Natural killer cell (primary cell): ENCODE measurements at regions of chr2 and their contacts with region 1.

Region 1: GRCh38 chr2:84925724-84926376 is 20.4 kb downstream of the TMSB10 start:
- DNase-seq: peak; percentile 97 to 99
- ATAC-seq: peak; percentile 85 to 92 (median 88)
- H3K4me3 ChIP-seq: peak overlapping the region; percentile 48
- H3K4me3 Mint-ChIP-seq: peak overlapping the region; percentile 98
- H3K27ac ChIP-seq: no peak overlapping the region
- H3K27ac Mint-ChIP-seq: peak overlapping the region; percentile 88 to 90
- H3K4me1 ChIP-seq: peaks cover 27% of the 10 kb centered on the region
- H3K4me1 Mint-ChIP-seq: peaks cover 21 to 28% of the 10 kb centered on the region in 2 donors
- H3K27me3 ChIP-seq: no peaks in the 10 kb centered on the region
- H3K27me3 Mint-ChIP-seq: no peaks in the 10 kb centered on the region
- CTCF ChIP-seq: peak; percentile 97

Region 2: DNA sequence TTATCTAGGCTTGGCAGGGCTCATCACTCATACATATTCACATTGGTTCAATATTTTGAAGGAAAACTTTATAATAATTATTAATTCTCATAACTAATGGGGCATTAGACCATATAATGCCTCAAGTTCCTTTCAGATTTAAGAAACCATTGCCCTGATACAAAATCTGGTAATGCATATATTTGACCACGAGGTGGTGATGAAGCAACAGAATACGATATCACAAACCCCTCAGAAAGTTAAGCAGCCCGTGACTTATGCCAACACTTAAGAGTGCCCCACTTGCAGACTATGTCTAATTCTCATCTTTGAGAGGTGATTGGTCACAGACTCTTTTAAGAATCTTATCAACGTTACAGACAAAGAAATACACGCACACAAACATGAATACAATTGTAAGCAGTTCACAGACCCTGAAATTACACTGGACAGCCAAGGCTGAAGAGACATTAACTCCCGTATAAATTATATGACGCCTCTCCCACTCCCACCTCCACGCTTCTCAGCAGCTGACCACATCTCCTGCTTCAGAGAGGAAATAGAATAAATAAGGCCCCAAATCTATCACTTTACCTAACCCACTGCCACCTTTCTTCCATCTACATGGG is 430.2 kb before region 1 on chr2:
- intact Hi-C with region 1: loop called (anchors 1 kb)
- DNase-seq: peak in 1 of 2 donors; percentile 88
- ATAC-seq: peak; percentile 89 to 100 (median 99)
- H3K4me3 ChIP-seq: no peak overlapping the region
- H3K4me3 Mint-ChIP-seq: no peak overlapping the region
- H3K27ac ChIP-seq: no peak overlapping the region
- H3K27ac Mint-ChIP-seq: no peak overlapping the region
- H3K4me1 ChIP-seq: peaks cover 3% of the 10 kb centered on the region
- H3K4me1 Mint-ChIP-seq: peaks cover 0 to 6% of the 10 kb centered on the region in 2 donors
- H3K27me3 ChIP-seq: no peaks in the 10 kb centered on the region
- H3K27me3 Mint-ChIP-seq: peaks cover 12 to 19% of the 10 kb centered on the region in 2 donors
- CTCF ChIP-seq: peak; percentile 84

Region 3: DNA sequence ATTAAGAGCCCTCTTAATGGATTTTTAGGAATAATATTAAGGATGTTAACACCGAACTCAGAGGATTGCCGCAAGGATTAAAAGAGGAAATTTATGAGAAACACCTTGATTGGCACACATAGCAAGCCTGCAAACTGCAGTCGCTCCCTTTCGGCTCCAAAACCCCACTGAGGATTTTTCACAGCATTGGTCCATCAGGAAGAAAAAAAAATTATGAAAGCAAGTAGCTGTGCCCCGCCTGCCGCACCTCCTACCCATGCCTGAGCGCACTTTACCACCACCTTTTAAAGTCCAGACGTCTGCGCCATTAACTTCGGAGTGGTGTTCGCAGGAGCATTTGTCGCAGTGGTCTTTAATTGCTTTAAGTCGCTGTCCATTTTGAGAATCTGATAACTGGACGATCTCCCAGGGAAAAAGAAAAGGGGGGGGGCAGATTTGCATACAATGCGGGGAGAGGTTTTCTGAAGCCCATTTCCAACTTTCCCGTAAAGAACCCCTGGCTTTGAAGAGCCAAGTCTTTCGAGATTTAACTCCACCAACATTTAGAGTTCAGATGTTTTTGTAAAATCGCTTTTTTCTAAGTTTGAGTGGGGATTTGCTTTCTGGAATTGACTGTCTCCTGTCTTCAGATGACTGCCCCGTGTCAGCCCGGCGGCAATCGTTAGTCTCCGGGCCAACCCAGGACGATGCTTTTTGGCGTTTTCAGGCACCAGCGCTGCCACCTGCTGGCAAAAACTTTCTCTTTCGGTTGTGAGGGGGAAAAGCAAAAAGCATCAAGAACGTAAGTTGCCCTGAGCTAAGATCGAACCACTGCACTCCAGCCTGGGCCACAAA is 44.1 kb before region 1 on chr2:
- intact Hi-C with region 1: loop called (anchors 2 kb)
- DNase-seq: peak; percentile 76 to 93
- ATAC-seq: peak; percentile 87 to 89 (median 88)
- H3K4me3 ChIP-seq: peak overlapping the region; percentile 55
- H3K4me3 Mint-ChIP-seq: peak overlapping the region; percentile 98
- H3K27ac ChIP-seq: peak overlapping the region; percentile 52
- H3K27ac Mint-ChIP-seq: peak overlapping the region; percentile 21 to 71
- H3K4me1 ChIP-seq: peaks cover 29% of the 10 kb centered on the region
- H3K4me1 Mint-ChIP-seq: peaks cover 34 to 37% of the 10 kb centered on the region in 2 donors
- H3K27me3 ChIP-seq: peaks cover 8% of the 10 kb centered on the region
- H3K27me3 Mint-ChIP-seq: peaks cover 9 to 24% of the 10 kb centered on the region in 2 donors
- CTCF ChIP-seq: peak; percentile 77

Region 4: GRCh38 chr2:84905181-84906107 is 20.4 kb before region 1 on chr2 and contains the start of gene TMSB10:
- intact Hi-C with region 1: loop called (anchors 1 kb)
- DNase-seq: peak; percentile 88 to 92
- ATAC-seq: peak; percentile 83 to 89 (median 84)
- H3K4me3 ChIP-seq: peak within 1 kb of the TSS; percentile 83
- H3K4me3 Mint-ChIP-seq: peak within 1 kb of the TSS; percentile 94
- H3K27ac ChIP-seq: peak within 1 kb of the TSS; percentile 81
- H3K27ac Mint-ChIP-seq: peak within 1 kb of the TSS; percentile 85 to 86
- H3K4me1 ChIP-seq: peaks cover 52% of the 10 kb centered on the region
- H3K4me1 Mint-ChIP-seq: peaks cover 55 to 76% of the 10 kb centered on the region in 2 donors
- H3K27me3 ChIP-seq: no peaks in the 10 kb centered on the region
- H3K27me3 Mint-ChIP-seq: no peaks in the 10 kb centered on the region
- CTCF ChIP-seq: no peak
- total RNA-seq, gene TMSB10: 1,247 to 1,683 (median 1,557) TPM

Region 5: DNA sequence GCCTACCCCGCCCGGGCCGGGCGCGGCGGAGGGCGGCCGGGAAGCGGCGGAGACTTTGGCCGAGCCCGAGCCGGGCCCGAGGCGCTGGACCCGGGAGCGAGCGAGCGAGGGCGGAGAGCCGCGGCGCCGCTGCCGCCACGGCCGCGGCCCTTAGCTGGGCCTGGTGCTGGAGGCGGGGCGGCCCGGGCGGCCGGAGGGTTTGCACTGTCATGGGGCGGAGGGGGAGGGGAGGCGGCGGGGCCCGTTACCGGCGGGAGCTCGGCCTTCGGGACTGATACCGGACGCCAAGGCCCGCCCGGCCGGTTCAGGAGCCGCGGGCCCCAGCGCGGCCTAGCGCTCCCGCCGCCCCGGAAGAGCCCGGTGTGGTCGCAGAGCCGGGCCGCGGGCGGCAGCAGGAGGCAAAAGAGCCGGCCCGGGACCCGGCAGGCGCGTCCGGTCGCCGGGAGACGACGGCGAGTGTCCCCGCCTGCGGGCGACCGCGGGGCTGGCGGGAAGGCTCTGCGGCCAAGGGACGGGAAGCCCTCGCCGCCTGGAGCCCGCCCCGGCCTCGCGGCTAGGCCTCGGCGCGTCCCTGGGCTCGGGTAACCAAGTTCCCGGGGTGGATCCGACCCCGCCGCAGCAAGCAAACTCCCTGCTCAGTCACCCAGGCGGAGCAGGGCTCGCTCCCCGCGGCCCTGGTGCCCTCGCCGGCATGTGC is 45.8 kb after region 1 on chr2:
- intact Hi-C with region 1: loop called (anchors 1 kb)
- DNase-seq: peak; percentile 75 to 84
- ATAC-seq: peak; percentile 44 to 64 (median 50)
- H3K4me3 ChIP-seq: peak overlapping the region; percentile 50
- H3K4me3 Mint-ChIP-seq: peak overlapping the region; percentile 83
- H3K27ac ChIP-seq: peak overlapping the region; percentile 85
- H3K27ac Mint-ChIP-seq: peak overlapping the region; percentile 90 to 92
- H3K4me1 ChIP-seq: peaks cover 14% of the 10 kb centered on the region
- H3K4me1 Mint-ChIP-seq: peaks cover 54 to 56% of the 10 kb centered on the region in 2 donors
- H3K27me3 ChIP-seq: no peaks in the 10 kb centered on the region
- H3K27me3 Mint-ChIP-seq: no peaks in the 10 kb centered on the region
- CTCF ChIP-seq: no peak

Region 6: DNA sequence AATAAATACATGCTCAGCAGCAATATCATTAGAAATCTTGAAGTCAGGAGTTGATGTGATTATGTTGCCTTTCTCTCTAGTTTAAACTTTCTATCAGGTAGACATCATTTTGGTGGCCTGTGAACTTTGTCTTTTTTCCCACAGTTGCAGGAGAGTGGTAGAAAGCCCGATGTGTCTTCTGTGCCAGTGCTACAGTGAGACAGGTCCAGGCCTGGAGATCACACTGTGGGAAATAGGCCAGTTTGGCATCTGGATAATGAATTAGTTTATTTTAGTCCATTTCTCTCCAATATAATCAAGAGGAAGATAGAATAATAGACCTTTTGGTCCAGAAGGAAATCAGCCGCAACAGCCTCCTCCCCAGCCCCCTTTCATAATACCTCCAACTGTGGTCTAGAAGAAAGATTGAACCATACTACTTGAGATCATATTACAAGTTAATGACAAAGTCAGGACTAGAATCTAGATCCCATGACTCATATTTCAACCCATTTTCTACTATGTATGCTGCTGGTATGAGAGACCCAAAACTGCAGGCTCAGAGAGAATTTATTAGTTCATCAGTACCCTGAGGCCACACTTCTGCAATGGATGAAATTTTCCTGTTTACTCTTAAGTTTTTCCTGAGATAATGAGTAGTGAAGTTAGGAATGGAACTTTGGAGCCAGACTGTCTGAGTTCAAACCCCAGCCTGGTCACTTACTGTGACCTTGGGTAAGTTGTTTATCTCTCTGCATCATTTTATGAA is 65.7 kb after region 1 on chr2:
- intact Hi-C with region 1: no loop called
- DNase-seq: no peak
- ATAC-seq: no peak
- H3K4me3 ChIP-seq: no peak overlapping the region
- H3K4me3 Mint-ChIP-seq: no peak overlapping the region
- H3K27ac ChIP-seq: no peak overlapping the region
- H3K27ac Mint-ChIP-seq: peak overlapping the region in 1 of 2 donors; percentile 10
- H3K4me1 ChIP-seq: peaks cover 3% of the 10 kb centered on the region
- H3K4me1 Mint-ChIP-seq: peaks cover 21 to 33% of the 10 kb centered on the region in 2 donors
- H3K27me3 ChIP-seq: no peaks in the 10 kb centered on the region
- H3K27me3 Mint-ChIP-seq: no peaks in the 10 kb centered on the region
- CTCF ChIP-seq: no peak

Region 7: GRCh38 chr2:85015653-85016360 is 90.0 kb after region 1 on chr2:
- intact Hi-C with region 1: loop called (anchors 2 kb)
- DNase-seq: no peak
- ATAC-seq: peak in 1 of 3 donors; percentile 40
- H3K4me3 ChIP-seq: no peak overlapping the region
- H3K4me3 Mint-ChIP-seq: no peak overlapping the region
- H3K27ac ChIP-seq: no peak overlapping the region
- H3K27ac Mint-ChIP-seq: peak overlapping the region; percentile 76
- H3K4me1 ChIP-seq: peaks cover 5% of the 10 kb centered on the region
- H3K4me1 Mint-ChIP-seq: peaks cover 61 to 69% of the 10 kb centered on the region in 2 donors
- H3K27me3 ChIP-seq: no peaks in the 10 kb centered on the region
- H3K27me3 Mint-ChIP-seq: no peaks in the 10 kb centered on the region
- CTCF ChIP-seq: no peak

Region 8: GRCh38 chr2:85277416-85278158 is 351.7 kb after region 1 on chr2:
- intact Hi-C with region 1: no loop called
- DNase-seq: no peak
- ATAC-seq: no peak
- H3K4me3 ChIP-seq: no peak overlapping the region
- H3K4me3 Mint-ChIP-seq: no peak overlapping the region
- H3K27ac ChIP-seq: no peak overlapping the region
- H3K27ac Mint-ChIP-seq: no peak overlapping the region
- H3K4me1 ChIP-seq: no peaks in the 10 kb centered on the region
- H3K4me1 Mint-ChIP-seq: no peaks in the 10 kb centered on the region
- H3K27me3 ChIP-seq: no peaks in the 10 kb centered on the region
- H3K27me3 Mint-ChIP-seq: peaks cover 0 to 8% of the 10 kb centered on the region in 2 donors
- CTCF ChIP-seq: no peak